Mammary epithelial cell (primary cell): ENCODE measurements at regions of chr6 and their contacts with region 1.

Region 1: GRCh38 chr6:26520853-26521599 is 17.1 kb upstream of the HMGN4 start:
- DNase-seq: peak; percentile 79
- H3K4me3 ChIP-seq: peak overlapping the region; percentile 54 to 62 (median 55)
- H3K27ac ChIP-seq: peak overlapping the region; percentile 52
- H3K4me1 ChIP-seq: peaks cover 15% of the 10 kb centered on the region
- H3K27me3 ChIP-seq: no peaks in the 10 kb centered on the region
- CTCF ChIP-seq: no peak

Region 2: GRCh38 chr6:26329763-26330511 is 191.1 kb before region 1 on chr6:
- CTCF ChIA-PET with region 1: no interaction called
- dilution Hi-C with region 1: no loop called
- in situ Hi-C with region 1: no loop called
- intact Hi-C with region 1: loop called (anchors 5 kb)
- DNase-seq: peak; percentile 51
- H3K4me3 ChIP-seq: peak overlapping the region; percentile 56 to 98 (median 86)
- H3K27ac ChIP-seq: no peak overlapping the region
- H3K4me1 ChIP-seq: peaks cover 13% of the 10 kb centered on the region
- H3K27me3 ChIP-seq: no peaks in the 10 kb centered on the region
- CTCF ChIP-seq: no peak

Region 3: GRCh38 chr6:26401987-26402658 is 118.9 kb before region 1 on chr6 and contains the start of gene BTN3A1:
- CTCF ChIA-PET with region 1: no interaction called
- dilution Hi-C with region 1: no loop called
- in situ Hi-C with region 1: no loop called
- intact Hi-C with region 1: loop called (anchors 5 kb)
- DNase-seq: peak; percentile 77
- H3K4me3 ChIP-seq: peak within 1 kb of the TSS; percentile 63 to 78 (median 68)
- H3K27ac ChIP-seq: peak within 1 kb of the TSS; percentile 76
- H3K4me1 ChIP-seq: no peaks in the 10 kb centered on the region
- H3K27me3 ChIP-seq: no peaks in the 10 kb centered on the region
- CTCF ChIP-seq: no peak
- total RNA-seq, gene BTN3A1: 5.1 to 7.3 TPM

Region 4: DNA sequence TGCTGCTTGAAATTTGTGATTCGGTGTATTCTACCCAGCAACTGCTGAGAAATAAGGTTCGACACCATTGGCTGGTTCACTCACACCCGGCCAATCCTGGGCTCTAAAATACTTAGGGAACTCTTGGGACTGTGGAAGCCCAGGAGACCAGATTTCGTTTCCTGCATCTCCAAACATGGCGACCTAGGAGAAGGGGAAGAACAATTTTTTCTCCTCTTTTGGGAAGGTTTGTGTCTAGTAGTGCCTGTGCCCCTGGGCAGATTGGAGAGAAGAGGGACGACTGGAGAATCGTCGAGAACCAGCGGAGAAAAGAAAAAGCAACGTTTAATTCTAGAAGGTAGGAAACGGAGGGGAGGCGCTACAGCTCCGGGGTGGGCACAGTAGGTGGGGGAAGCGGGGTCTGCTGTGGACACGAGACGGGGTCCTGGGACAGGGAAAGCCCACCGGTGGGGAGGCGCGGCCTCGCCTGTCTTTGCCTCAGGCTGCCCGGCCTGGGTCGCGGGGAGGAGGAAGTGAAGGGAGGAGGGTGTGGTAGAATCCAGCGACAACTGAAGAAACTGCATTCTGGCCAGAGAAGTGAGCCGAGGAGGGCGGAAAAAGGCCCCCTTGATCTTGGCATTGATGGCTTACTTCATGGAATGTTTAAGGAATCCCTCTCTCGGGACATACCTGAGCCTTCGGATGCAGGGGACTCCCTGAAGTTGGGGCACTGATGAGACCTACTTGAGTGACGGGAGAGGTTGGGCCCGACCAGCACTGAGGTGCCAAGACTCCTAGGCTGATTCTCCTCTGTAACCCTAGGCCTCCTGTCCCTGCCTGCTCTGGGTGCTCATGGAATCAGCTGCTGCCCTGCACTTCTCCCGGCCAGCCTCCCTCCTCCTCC is 63.0 kb before region 1 on chr6 and contains the start of gene BTN2A1:
- CTCF ChIA-PET with region 1: no interaction called
- dilution Hi-C with region 1: no loop called
- in situ Hi-C with region 1: no loop called
- intact Hi-C with region 1: no loop called
- DNase-seq: peak; percentile 88
- H3K4me3 ChIP-seq: peak within 1 kb of the TSS; percentile 85 to 97 (median 86)
- H3K27ac ChIP-seq: peak within 1 kb of the TSS; percentile 91
- H3K4me1 ChIP-seq: peaks cover 8% of the 10 kb centered on the region
- H3K27me3 ChIP-seq: no peaks in the 10 kb centered on the region
- CTCF ChIP-seq: no peak
- total RNA-seq, gene BTN2A1: 7.8 to 19.2 TPM

Region 5: GRCh38 chr6:26473758-26474438 is 47.1 kb before region 1 on chr6:
- CTCF ChIA-PET with region 1: no interaction called
- dilution Hi-C with region 1: no loop called
- in situ Hi-C with region 1: no loop called
- intact Hi-C with region 1: loop called (anchors 5 kb)
- DNase-seq: peak; percentile 93
- H3K4me3 ChIP-seq: peak overlapping the region; percentile 52 to 72 (median 67)
- H3K27ac ChIP-seq: peak overlapping the region; percentile 87
- H3K4me1 ChIP-seq: peaks cover 16% of the 10 kb centered on the region
- H3K27me3 ChIP-seq: no peaks in the 10 kb centered on the region
- CTCF ChIP-seq: no peak

Region 6: GRCh38 chr6:26501482-26501986 is 19.5 kb before region 1 on chr6:
- CTCF ChIA-PET with region 1: no interaction called
- dilution Hi-C with region 1: no loop called
- in situ Hi-C with region 1: no loop called
- intact Hi-C with region 1: no loop called
- DNase-seq: no peak
- H3K4me3 ChIP-seq: peak overlapping the region in 1 of 3 experiments; percentile 21
- H3K27ac ChIP-seq: no peak overlapping the region
- H3K4me1 ChIP-seq: peaks cover 5% of the 10 kb centered on the region
- H3K27me3 ChIP-seq: peaks cover 12% of the 10 kb centered on the region
- CTCF ChIP-seq: no peak

Region 7: DNA sequence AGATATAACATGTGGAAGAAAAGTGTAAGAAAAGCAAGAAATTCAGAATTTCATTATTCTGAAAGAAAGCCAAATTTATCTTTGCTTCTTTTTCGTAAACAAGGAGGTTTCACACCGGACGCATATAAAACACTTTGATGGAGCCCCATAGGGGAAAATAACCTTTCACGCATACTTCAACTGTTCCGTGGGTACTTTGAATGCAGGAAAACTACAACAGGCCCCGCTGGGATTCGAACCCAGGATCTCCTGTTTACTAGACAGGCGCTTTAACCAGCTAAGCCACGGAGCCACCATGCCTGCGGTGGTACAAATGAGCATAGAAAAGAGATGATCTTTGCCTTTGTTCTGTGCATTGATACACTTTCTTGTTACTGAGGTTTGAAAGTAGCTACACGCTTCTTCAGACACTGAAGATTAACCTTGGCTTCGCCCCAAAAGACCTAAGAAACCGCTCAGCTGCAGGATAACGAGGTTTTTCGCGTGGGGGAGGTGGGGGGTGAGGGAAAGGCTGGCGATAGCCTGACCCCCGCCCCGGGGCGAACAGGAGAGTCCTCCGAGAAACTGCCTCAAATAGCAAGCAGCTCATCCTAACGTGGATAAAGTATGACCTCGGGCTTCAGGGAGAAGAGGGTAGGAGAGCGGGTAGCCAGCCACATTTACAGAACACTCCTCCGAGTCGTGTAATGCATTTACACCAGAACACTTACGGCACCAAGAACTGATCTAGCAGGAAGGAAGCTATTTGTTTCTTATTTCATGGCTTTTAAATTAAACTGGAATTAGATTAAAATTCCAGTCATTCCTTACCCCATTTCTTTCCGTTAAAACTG is 11.9 kb after region 1 on chr6:
- CTCF ChIA-PET with region 1: interaction called, 3 read pairs
- dilution Hi-C with region 1: no loop called
- in situ Hi-C with region 1: no loop called
- intact Hi-C with region 1: loop called (anchors 1 kb)
- DNase-seq: peak; percentile 87
- H3K4me3 ChIP-seq: peak overlapping the region; percentile 80 to 89 (median 83)
- H3K27ac ChIP-seq: peak overlapping the region; percentile 23
- H3K4me1 ChIP-seq: peaks cover 15% of the 10 kb centered on the region
- H3K27me3 ChIP-seq: no peaks in the 10 kb centered on the region
- CTCF ChIP-seq: no peak

Region 8: DNA sequence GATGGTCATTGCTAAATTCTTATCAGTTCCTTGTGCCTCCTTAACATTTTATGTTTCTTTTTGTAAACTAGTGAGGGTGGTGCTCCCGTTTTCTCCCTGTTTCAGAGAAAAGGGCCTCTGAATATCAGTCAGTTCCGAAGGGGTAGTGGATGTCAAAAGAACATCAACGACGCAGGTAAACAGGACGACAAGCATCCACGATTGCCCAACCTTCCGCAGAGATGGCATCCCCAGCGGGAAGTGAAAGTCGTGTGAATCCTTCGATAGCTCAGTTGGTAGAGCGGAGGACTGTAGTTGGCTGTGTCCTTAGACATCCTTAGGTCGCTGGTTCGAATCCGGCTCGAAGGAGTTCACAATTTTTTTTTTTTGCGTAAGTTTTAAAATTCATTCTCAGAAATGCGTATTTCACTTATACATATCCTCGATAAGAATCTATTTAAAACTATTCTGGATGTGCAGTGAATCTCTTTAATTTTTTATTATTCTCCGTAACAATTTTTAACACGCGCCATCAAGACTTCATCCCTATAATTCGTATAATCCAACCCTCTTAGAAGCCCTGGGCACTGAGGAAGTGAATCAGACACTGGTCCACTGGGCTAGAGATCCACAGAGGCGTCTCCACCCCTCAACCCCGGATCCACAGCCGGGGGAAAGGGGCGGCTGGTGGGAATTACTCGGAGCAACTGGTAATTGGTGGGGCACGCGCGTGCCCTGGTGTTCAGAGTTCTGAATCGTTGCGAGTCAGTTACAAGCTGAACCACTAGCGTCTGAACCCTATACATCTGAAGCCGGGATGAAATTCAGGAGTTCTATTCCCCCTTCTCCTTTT is 47.8 kb after region 1 on chr6:
- CTCF ChIA-PET with region 1: no interaction called
- dilution Hi-C with region 1: no loop called
- in situ Hi-C with region 1: no loop called
- intact Hi-C with region 1: loop called (anchors 5 kb)
- DNase-seq: peak; percentile 85
- H3K4me3 ChIP-seq: peak overlapping the region; percentile 62 to 73 (median 71)
- H3K27ac ChIP-seq: no peak overlapping the region
- H3K4me1 ChIP-seq: no peaks in the 10 kb centered on the region
- H3K27me3 ChIP-seq: no peaks in the 10 kb centered on the region
- CTCF ChIP-seq: peak in 1 of 2 donors; percentile 27